CD14-positive monocyte (primary cell): ENCODE measurements at regions of chr3 and their contacts with region 1.

Region 1: DNA sequence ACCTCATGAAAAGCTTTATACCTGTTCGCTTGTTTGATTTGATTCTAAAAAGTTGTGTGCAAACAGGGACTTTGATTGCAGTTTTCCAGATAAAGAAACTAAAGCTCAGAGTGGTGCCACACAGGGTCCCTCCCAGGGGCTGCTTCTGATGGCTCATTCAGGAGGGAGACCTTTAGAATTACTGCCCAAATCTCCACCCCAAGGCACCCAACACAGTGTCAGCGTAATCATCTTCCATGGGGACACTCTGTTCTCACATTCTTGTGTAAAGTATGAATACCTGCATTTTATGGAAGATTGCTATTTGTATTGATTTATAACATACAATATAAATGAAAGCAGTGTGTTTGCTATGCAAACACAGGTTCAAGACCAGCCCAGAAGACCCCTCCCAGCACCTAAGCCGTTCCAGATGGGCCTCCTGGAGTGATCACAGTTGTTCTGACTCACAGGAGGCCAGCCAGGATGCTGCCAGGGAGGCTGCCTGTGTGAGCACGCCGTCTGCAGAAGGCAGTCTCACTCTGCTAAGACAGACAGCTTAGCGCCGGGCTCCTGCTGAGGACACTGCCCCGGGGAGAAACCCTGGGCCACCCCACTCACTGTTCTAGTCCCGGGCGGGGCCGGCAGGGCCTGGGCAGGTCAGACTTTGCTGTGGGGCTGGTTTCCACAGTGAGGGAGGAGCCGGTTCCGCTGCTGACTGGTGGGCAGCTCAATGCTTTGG is 185.6 kb downstream of the FAM43A start:
- DNase-seq: peak; percentile 51 to 65 (median 53)
- H3K4me3 ChIP-seq: peak overlapping the region in 1 of 3 experiments; percentile 49
- H3K4me3 Mint-ChIP-seq: peak overlapping the region in 1 of 2 donors; percentile 83
- H3K27ac ChIP-seq: peak overlapping the region; percentile 73 to 90
- H3K27ac Mint-ChIP-seq: peak overlapping the region; percentile 94 to 99 (median 98)
- H3K4me1 ChIP-seq: peaks cover 48 to 59% of the 10 kb centered on the region in 2 donors
- H3K4me1 Mint-ChIP-seq: peaks cover 53% of the 10 kb centered on the region
- H3K27me3 ChIP-seq: no peaks in the 10 kb centered on the region
- H3K27me3 Mint-ChIP-seq: peaks cover 0 to 3% (median 2%) of the 10 kb centered on the region in 3 donors
- CTCF ChIP-seq: no peak

Region 2: GRCh38 chr3:194738254-194739093 is 132.8 kb before region 1 on chr3:
- intact Hi-C with region 1: loop called in 1 of 2 experiments (anchors 10 kb)
- DNase-seq: no peak
- H3K4me3 ChIP-seq: no peak overlapping the region
- H3K4me3 Mint-ChIP-seq: no peak overlapping the region
- H3K27ac ChIP-seq: peak overlapping the region; percentile 22 to 88
- H3K27ac Mint-ChIP-seq: peak overlapping the region in 3 of 7 donors; percentile 9 to 50 (median 46)
- H3K4me1 ChIP-seq: peaks cover 9 to 11% of the 10 kb centered on the region in 2 donors
- H3K4me1 Mint-ChIP-seq: no peaks in the 10 kb centered on the region
- H3K27me3 ChIP-seq: no peaks in the 10 kb centered on the region
- H3K27me3 Mint-ChIP-seq: peaks cover 0 to 1% (median 0%) of the 10 kb centered on the region in 3 donors
- CTCF ChIP-seq: no peak

Region 3: GRCh38 chr3:194769020-194769643 is 102.2 kb before region 1 on chr3:
- intact Hi-C with region 1: no loop called
- DNase-seq: peak; percentile 93 to 95 (median 93)
- H3K4me3 ChIP-seq: peak overlapping the region; percentile 24 to 71 (median 57)
- H3K4me3 Mint-ChIP-seq: peak overlapping the region; percentile 72 to 88
- H3K27ac ChIP-seq: peak overlapping the region in 1 of 2 donors; percentile 22
- H3K27ac Mint-ChIP-seq: peak overlapping the region; percentile 24 to 90 (median 76)
- H3K4me1 ChIP-seq: peaks cover 30 to 39% of the 10 kb centered on the region in 2 donors
- H3K4me1 Mint-ChIP-seq: peaks cover 43% of the 10 kb centered on the region
- H3K27me3 ChIP-seq: no peaks in the 10 kb centered on the region
- H3K27me3 Mint-ChIP-seq: peaks cover 0 to 6% (median 3%) of the 10 kb centered on the region in 3 donors
- CTCF ChIP-seq: no peak

Region 4: DNA sequence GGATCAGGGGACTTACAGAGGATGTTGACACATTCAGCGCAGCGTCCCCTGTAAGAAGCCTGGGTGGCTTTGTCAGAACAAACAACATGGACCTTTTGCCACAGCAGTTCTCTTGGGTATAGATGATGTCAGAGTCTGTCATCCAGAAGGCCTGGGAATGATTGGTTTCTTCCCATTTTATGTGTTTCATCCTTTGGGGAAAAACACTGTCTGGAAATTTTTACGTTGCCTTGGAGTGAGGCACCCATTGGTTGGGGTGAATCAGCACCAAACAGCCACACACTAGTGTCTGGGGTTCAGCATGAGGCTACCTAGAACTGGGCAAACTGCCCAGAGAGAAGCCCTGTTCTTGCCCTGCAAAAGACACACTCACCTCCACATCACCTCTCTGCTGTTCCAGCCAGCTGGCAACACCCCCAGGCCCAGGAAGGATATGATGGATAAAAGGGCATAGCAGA is 62.6 kb before region 1 on chr3:
- intact Hi-C with region 1: no loop called
- DNase-seq: no peak
- H3K4me3 ChIP-seq: no peak overlapping the region
- H3K4me3 Mint-ChIP-seq: no peak overlapping the region
- H3K27ac ChIP-seq: no peak overlapping the region
- H3K27ac Mint-ChIP-seq: no peak overlapping the region
- H3K4me1 ChIP-seq: no peaks in the 10 kb centered on the region
- H3K4me1 Mint-ChIP-seq: peaks cover 4% of the 10 kb centered on the region
- H3K27me3 ChIP-seq: no peaks in the 10 kb centered on the region
- H3K27me3 Mint-ChIP-seq: peaks cover 1 to 5% (median 2%) of the 10 kb centered on the region in 3 donors
- CTCF ChIP-seq: no peak

Region 5: GRCh38 chr3:194930377-194931204 is 59.3 kb after region 1 on chr3:
- intact Hi-C with region 1: loop called in 1 of 2 experiments (anchors 5 kb)
- DNase-seq: peak; percentile 64 to 75 (median 72)
- H3K4me3 ChIP-seq: peak overlapping the region in 1 of 3 experiments; percentile 13
- H3K4me3 Mint-ChIP-seq: no peak overlapping the region
- H3K27ac ChIP-seq: peak overlapping the region; percentile 56 to 75
- H3K27ac Mint-ChIP-seq: peak overlapping the region; percentile 59 to 94 (median 88)
- H3K4me1 ChIP-seq: peaks cover 63 to 64% of the 10 kb centered on the region in 2 donors
- H3K4me1 Mint-ChIP-seq: peaks cover 71% of the 10 kb centered on the region
- H3K27me3 ChIP-seq: no peaks in the 10 kb centered on the region
- H3K27me3 Mint-ChIP-seq: peaks cover 0 to 5% (median 0%) of the 10 kb centered on the region in 3 donors
- CTCF ChIP-seq: no peak